ENCODE measurements at regions of chr21 and their contacts with region 1.

Region 1: GRCh38 chr21:44454747-44455523 is at the start of gene LRRC3:
- DNase-seq: peak; percentile 61 to 82 (median 81)
- ATAC-seq: peak; percentile 91
- H3K4me3 ChIP-seq: peak within 1 kb of the TSS; percentile 60
- H3K4me3 Mint-ChIP-seq: peak within 1 kb of the TSS; percentile 68 to 84 (median 77)
- H3K27ac ChIP-seq: peak within 1 kb of the TSS; percentile 55
- H3K27ac Mint-ChIP-seq: peak within 1 kb of the TSS in 4 of 9 donors; percentile 1 to 60 (median 54)
- H3K4me1 ChIP-seq: peaks cover 0 to 6% of the 10 kb centered on the region in 2 donors
- H3K4me1 Mint-ChIP-seq: peaks cover 0 to 10% (median 6%) of the 10 kb centered on the region in 7 donors
- H3K27me3 ChIP-seq: no peaks in the 10 kb centered on the region
- H3K27me3 Mint-ChIP-seq: peaks cover 0 to 33% (median 12%) of the 10 kb centered on the region in 5 donors
- total RNA-seq, gene LRRC3: 0.79 to 3.3 (median 1.0) TPM

Region 2: DNA sequence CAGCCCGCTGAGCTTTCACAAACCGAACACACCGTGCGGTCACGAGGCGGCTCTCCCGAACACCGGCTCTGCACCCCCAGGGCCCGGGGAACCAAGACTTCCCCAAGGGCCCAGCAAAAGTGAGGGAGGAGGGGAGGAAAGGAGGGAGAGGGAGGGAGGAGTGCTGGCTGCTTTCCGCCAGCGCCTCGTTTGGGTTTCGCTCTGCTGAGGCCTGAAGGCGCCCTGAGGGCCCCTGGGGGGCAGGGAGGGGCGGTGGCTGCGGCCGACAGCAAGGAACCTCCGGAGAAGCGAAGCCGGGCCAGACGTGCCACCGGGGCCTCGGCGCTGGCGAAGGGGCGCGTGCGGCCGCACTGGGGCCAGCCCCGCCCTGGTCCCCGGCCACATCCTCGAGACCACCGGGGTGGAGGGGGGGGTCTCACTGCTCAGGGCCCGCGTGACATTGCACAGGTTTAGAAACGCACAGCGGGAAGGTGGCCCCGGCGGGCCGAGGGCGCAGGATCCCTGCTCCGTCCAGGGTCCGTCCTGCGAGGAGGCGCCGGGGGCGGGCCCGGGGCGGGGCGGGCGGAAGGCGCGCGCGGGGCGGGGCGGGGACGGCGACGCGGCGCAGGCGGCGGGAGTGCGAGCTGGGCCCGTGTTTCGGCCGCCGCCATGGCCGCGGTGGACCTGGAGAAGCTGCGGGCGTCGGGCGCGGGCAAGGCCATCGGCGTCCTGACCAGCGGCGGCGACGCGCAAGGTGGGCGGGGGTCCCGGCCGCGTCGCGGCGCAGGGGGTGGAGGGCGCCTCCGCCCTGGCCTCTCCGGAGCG is 155.3 kb before region 1 on chr21 and contains the start of gene PFKL:
- CTCF ChIA-PET with region 1: no interaction called
- POLR2A ChIA-PET with region 1: interaction called, 3 read pairs
- intact Hi-C with region 1: loop called in 1 of 2 experiments (anchors 5 kb)
- DNase-seq: peak; percentile 28 to 79 (median 47)
- ATAC-seq: peak; percentile 79
- H3K4me3 ChIP-seq: peak within 1 kb of the TSS; percentile 59
- H3K4me3 Mint-ChIP-seq: peak within 1 kb of the TSS; percentile 85 to 95 (median 91)
- H3K27ac ChIP-seq: peak within 1 kb of the TSS; percentile 80
- H3K27ac Mint-ChIP-seq: peak within 1 kb of the TSS; percentile 91 to 97 (median 94)
- H3K4me1 ChIP-seq: peaks cover 30 to 57% of the 10 kb centered on the region in 2 donors
- H3K4me1 Mint-ChIP-seq: peaks cover 36 to 65% (median 49%) of the 10 kb centered on the region in 7 donors
- H3K27me3 ChIP-seq: no peaks in the 10 kb centered on the region
- H3K27me3 Mint-ChIP-seq: no peaks in the 10 kb centered on the region
- total RNA-seq, gene PFKL: 107 to 196 (median 122) TPM

Region 3: GRCh38 chr21:44428281-44428942 is 26.5 kb before region 1 on chr21:
- CTCF ChIA-PET with region 1: no interaction called
- POLR2A ChIA-PET with region 1: no interaction called
- intact Hi-C with region 1: loop called (anchors 1 kb)
- DNase-seq: peak; percentile 45 to 83 (median 67)
- ATAC-seq: peak; percentile 71
- H3K4me3 ChIP-seq: no peak overlapping the region
- H3K4me3 Mint-ChIP-seq: no peak overlapping the region
- H3K27ac ChIP-seq: no peak overlapping the region
- H3K27ac Mint-ChIP-seq: peak overlapping the region in 3 of 9 donors; percentile 4 to 53 (median 52)
- H3K4me1 ChIP-seq: no peaks in the 10 kb centered on the region
- H3K4me1 Mint-ChIP-seq: peaks cover 0 to 6% (median 0%) of the 10 kb centered on the region in 7 donors
- H3K27me3 ChIP-seq: no peaks in the 10 kb centered on the region
- H3K27me3 Mint-ChIP-seq: no peaks in the 10 kb centered on the region

Measured in naive thymus-derived CD4-positive, alpha-beta T cell (primary cell).